Naive thymus-derived CD4-positive, alpha-beta T cell (primary cell): ENCODE measurements at regions of chr12 and their contacts with region 1.

Region 1: GRCh38 chr12:45990468-45991283 is at the start of gene SCAF11:
- DNase-seq: peak; percentile 100
- ATAC-seq: peak; percentile 92
- H3K4me3 ChIP-seq: peak within 1 kb of the TSS; percentile 94
- H3K4me3 Mint-ChIP-seq: peak within 1 kb of the TSS; percentile 91 to 99 (median 96)
- H3K27ac ChIP-seq: peak within 1 kb of the TSS; percentile 97
- H3K27ac Mint-ChIP-seq: peak within 1 kb of the TSS; percentile 99 to 100 (median 100)
- H3K4me1 ChIP-seq: peaks cover 21 to 35% of the 10 kb centered on the region in 2 donors
- H3K4me1 Mint-ChIP-seq: peaks cover 36 to 53% (median 47%) of the 10 kb centered on the region in 7 donors
- H3K27me3 ChIP-seq: no peaks in the 10 kb centered on the region
- H3K27me3 Mint-ChIP-seq: peaks cover 0 to 15% (median 0%) of the 10 kb centered on the region in 5 donors
- total RNA-seq, gene SCAF11: 144 to 194 (median 165) TPM

Region 2: DNA sequence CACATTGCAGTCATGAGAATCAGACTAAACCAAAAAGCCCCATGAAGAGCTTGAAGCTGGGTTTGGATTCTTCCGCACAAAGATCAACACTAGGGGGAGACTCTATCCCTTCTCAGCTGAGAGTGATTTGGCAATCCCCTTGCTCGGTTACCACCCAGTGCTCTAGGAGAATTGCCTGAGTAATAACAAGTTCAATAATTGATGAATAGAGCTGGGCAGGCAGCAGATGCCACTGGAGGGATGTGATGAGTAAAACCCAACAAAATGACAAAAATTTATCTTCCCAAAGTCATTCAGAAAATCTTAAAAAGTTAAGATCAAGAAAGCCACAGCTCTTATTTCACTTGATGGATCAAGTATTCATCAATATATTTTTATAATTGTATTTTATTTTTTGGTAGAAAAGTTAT is 446.8 kb before region 1 on chr12:
- CTCF ChIA-PET with region 1: no interaction called
- POLR2A ChIA-PET with region 1: no interaction called
- intact Hi-C with region 1: loop called (anchors 1 to 10 kb)
- DNase-seq: peak in 8 of 9 donors; percentile 22 to 74 (median 61)
- ATAC-seq: peak; percentile 97
- H3K4me3 ChIP-seq: no peak overlapping the region
- H3K4me3 Mint-ChIP-seq: no peak overlapping the region
- H3K27ac ChIP-seq: no peak overlapping the region
- H3K27ac Mint-ChIP-seq: peak overlapping the region in 1 of 9 donors; percentile 33
- H3K4me1 ChIP-seq: no peaks in the 10 kb centered on the region
- H3K4me1 Mint-ChIP-seq: peaks cover 0 to 6% (median 0%) of the 10 kb centered on the region in 7 donors
- H3K27me3 ChIP-seq: no peaks in the 10 kb centered on the region
- H3K27me3 Mint-ChIP-seq: peaks cover 0 to 35% (median 0%) of the 10 kb centered on the region in 5 donors

Region 3: GRCh38 chr12:46071769-46072624 is 81.3 kb after region 1 on chr12:
- CTCF ChIA-PET with region 1: no interaction called
- POLR2A ChIA-PET with region 1: interaction called, 3 read pairs
- intact Hi-C with region 1: loop called (anchors 1 kb)
- DNase-seq: peak; percentile 25 to 62 (median 51)
- ATAC-seq: peak; percentile 91
- H3K4me3 ChIP-seq: no peak overlapping the region
- H3K4me3 Mint-ChIP-seq: peak overlapping the region in 3 of 10 donors; percentile 12 to 49 (median 16)
- H3K27ac ChIP-seq: no peak overlapping the region
- H3K27ac Mint-ChIP-seq: peak overlapping the region in 2 of 9 donors; percentile 20 to 63
- H3K4me1 ChIP-seq: no peaks in the 10 kb centered on the region
- H3K4me1 Mint-ChIP-seq: peaks cover 0 to 14% (median 5%) of the 10 kb centered on the region in 7 donors
- H3K27me3 ChIP-seq: no peaks in the 10 kb centered on the region
- H3K27me3 Mint-ChIP-seq: peaks cover 0 to 15% (median 4%) of the 10 kb centered on the region in 5 donors

Region 4: GRCh38 chr12:46303039-46303666 is 312.5 kb after region 1 on chr12:
- CTCF ChIA-PET with region 1: interaction called, 7 read pairs
- POLR2A ChIA-PET with region 1: interaction called, 3 read pairs
- intact Hi-C with region 1: loop called in 1 of 2 experiments (anchors 1 kb)
- DNase-seq: peak in 7 of 9 donors; percentile 40 to 66 (median 57)
- ATAC-seq: peak; percentile 91
- H3K4me3 ChIP-seq: no peak overlapping the region
- H3K4me3 Mint-ChIP-seq: no peak overlapping the region
- H3K27ac ChIP-seq: no peak overlapping the region
- H3K27ac Mint-ChIP-seq: peak overlapping the region in 2 of 9 donors; percentile 1 to 7
- H3K4me1 ChIP-seq: no peaks in the 10 kb centered on the region
- H3K4me1 Mint-ChIP-seq: peaks cover 5 to 20% (median 15%) of the 10 kb centered on the region in 7 donors
- H3K27me3 ChIP-seq: no peaks in the 10 kb centered on the region
- H3K27me3 Mint-ChIP-seq: peaks cover 0 to 22% (median 0%) of the 10 kb centered on the region in 5 donors

Region 5: GRCh38 chr12:46661110-46661845 is 670.6 kb after region 1 on chr12:
- CTCF ChIA-PET with region 1: no interaction called
- POLR2A ChIA-PET with region 1: no interaction called
- intact Hi-C with region 1: loop called in 1 of 2 experiments (anchors 5 kb)
- DNase-seq: peak in 7 of 9 donors; percentile 18 to 61 (median 50)
- ATAC-seq: peak; percentile 79
- H3K4me3 ChIP-seq: no peak overlapping the region
- H3K4me3 Mint-ChIP-seq: peak overlapping the region in 2 of 10 donors; percentile 31 to 43
- H3K27ac ChIP-seq: no peak overlapping the region
- H3K27ac Mint-ChIP-seq: peak overlapping the region in 4 of 9 donors; percentile 32 to 58 (median 40)
- H3K4me1 ChIP-seq: peaks cover 0 to 9% of the 10 kb centered on the region in 2 donors
- H3K4me1 Mint-ChIP-seq: peaks cover 11 to 53% (median 28%) of the 10 kb centered on the region in 7 donors
- H3K27me3 ChIP-seq: no peaks in the 10 kb centered on the region
- H3K27me3 Mint-ChIP-seq: no peaks in the 10 kb centered on the region

Region 6: DNA sequence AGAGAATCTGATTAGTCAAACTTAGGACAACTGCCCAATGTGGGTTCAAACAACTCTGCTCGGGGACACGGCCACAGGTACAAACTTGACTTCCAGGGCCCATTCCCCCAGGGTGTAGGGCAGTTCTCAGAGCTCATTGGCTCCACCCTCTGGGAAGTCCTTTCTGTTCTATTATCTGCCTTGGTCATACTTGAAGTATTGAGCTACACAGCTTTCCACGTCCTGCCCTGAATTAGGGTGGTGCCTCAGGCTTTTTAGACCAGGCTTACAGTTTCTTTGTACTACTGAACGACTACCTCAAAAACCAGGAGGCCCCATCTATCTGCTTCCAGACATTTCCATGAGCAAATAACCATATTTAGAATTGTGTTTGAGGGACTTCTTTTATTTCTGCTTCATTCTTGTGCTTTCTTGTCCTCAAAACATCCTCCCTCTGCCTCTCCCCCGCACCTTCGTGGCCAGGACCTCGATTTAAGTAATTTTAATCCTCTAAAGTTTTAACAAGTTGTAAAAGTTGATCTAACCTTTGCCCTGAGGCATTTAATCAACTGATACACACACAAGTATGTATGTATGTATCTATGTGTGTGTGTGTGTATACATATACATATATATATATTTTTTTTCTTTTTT is 1370.8 kb after region 1 on chr12:
- CTCF ChIA-PET with region 1: no interaction called
- POLR2A ChIA-PET with region 1: no interaction called
- intact Hi-C with region 1: loop called in 1 of 2 experiments (anchors 2 kb)
- DNase-seq: peak in 8 of 9 donors; percentile 10 to 50 (median 32)
- ATAC-seq: peak; percentile 68
- H3K4me3 ChIP-seq: peak overlapping the region; percentile 48
- H3K4me3 Mint-ChIP-seq: peak overlapping the region; percentile 78 to 88 (median 84)
- H3K27ac ChIP-seq: peak overlapping the region; percentile 80
- H3K27ac Mint-ChIP-seq: peak overlapping the region in 8 of 9 donors; percentile 96 to 100 (median 98)
- H3K4me1 ChIP-seq: peaks cover 56 to 67% of the 10 kb centered on the region in 2 donors
- H3K4me1 Mint-ChIP-seq: peaks cover 52 to 68% (median 59%) of the 10 kb centered on the region in 7 donors
- H3K27me3 ChIP-seq: no peaks in the 10 kb centered on the region
- H3K27me3 Mint-ChIP-seq: no peaks in the 10 kb centered on the region